Uterus (tissue), 4 donors: ENCODE measurements at regions of chr2 and their contacts with region 1.

Region 1: DNA sequence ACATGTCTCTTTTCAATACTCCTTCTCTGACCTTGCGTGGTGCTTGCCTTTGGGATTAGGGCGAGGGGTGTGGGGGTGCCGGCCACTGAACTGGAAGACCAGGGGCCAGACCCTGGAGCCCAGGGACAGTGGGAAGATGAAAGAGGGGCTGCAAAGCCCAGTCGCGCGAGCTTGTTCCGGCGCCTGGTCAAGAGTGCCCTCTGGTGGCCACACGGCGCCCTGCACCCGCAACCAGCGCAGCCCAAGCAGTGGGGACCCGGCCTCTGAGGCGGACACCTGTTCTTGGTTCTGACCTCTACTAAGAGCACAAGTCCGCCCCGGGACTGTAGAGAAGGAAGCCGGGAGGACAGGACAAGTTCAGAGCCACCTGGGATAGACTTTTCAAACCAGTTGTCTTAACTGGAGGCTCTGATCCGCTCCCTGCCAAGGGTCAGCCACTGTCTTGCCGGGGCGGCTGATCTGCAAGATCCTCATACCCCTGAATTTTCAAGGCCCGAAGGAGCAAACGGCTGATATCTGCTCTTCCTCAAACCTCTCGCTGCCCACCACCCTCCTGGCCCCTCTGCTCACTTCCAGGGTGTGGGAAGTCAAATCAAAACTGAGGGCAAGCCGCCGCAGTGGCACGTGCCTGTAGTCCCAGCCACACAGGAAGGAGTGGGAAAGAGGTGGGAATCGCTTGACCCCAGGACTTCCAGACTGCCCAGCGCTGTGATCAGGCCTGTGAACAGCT is 14.9 kb upstream of the MSH6 start:
- DNase-seq: peak; percentile 58 to 71
- H3K4me3 ChIP-seq: no peak overlapping the region
- H3K27ac ChIP-seq: no peak overlapping the region
- H3K4me1 ChIP-seq: no peaks in the 10 kb centered on the region
- H3K27me3 ChIP-seq: no peaks in the 10 kb centered on the region
- CTCF ChIP-seq: peak; percentile 93 to 99 (median 95)
- POLR2A ChIP-seq: no peak

Region 2: GRCh38 chr2:47437287-47437686 is 330.8 kb before region 1 on chr2:
- intact Hi-C with region 1: loop called (anchors 5 kb)
- DNase-seq: no peak
- H3K4me3 ChIP-seq: no peak overlapping the region
- H3K27ac ChIP-seq: no peak overlapping the region
- H3K4me1 ChIP-seq: no peaks in the 10 kb centered on the region
- H3K27me3 ChIP-seq: no peaks in the 10 kb centered on the region
- CTCF ChIP-seq: peak in 3 of 4 experiments; percentile 44 to 61 (median 60)
- POLR2A ChIP-seq: no peak

Region 3: GRCh38 chr2:47520825-47521665 is 247.0 kb before region 1 on chr2:
- intact Hi-C with region 1: no loop called
- DNase-seq: peak; percentile 32 to 34
- H3K4me3 ChIP-seq: peak overlapping the region; percentile 20 to 39
- H3K27ac ChIP-seq: peak overlapping the region in 1 of 2 donors; percentile 64
- H3K4me1 ChIP-seq: peaks cover 0 to 3% of the 10 kb centered on the region in 2 donors
- H3K27me3 ChIP-seq: no peaks in the 10 kb centered on the region
- CTCF ChIP-seq: peak in 1 of 4 experiments; percentile 12
- POLR2A ChIP-seq: no peak